ENCODE measurements at regions of chr4 and their contacts with region 1.

Region 1: DNA sequence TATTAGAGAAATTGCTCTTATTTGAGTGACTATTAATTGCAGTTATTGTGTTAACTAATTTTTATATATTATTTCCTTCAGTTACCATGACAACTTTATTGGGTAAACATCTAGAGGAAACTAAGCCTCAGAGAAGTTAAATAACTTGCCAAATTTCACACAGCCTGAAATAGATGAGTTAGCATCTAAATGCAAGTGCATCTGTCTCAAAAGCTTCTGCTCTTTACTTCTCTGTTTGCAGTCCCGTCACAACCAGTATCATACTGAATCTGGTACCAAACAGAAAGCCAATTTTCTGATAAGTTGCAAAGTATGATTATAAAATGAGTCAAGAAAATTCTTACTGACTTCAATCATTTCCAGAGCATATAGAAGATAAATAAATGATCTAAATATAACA is 1544.9 kb upstream of the PCDH7 start:
- DNase-seq: no peak
- ATAC-seq: no peak
- H3K4me3 ChIP-seq: no peak overlapping the region
- H3K4me3 Mint-ChIP-seq: no peak overlapping the region
- H3K27ac ChIP-seq: no peak overlapping the region
- H3K27ac Mint-ChIP-seq: no peak overlapping the region
- H3K4me1 ChIP-seq: no peaks in the 10 kb centered on the region
- H3K4me1 Mint-ChIP-seq: no peaks in the 10 kb centered on the region
- H3K27me3 ChIP-seq: no peaks in the 10 kb centered on the region
- H3K27me3 Mint-ChIP-seq: no peaks in the 10 kb centered on the region
- CTCF ChIP-seq: no peak

Region 2: DNA sequence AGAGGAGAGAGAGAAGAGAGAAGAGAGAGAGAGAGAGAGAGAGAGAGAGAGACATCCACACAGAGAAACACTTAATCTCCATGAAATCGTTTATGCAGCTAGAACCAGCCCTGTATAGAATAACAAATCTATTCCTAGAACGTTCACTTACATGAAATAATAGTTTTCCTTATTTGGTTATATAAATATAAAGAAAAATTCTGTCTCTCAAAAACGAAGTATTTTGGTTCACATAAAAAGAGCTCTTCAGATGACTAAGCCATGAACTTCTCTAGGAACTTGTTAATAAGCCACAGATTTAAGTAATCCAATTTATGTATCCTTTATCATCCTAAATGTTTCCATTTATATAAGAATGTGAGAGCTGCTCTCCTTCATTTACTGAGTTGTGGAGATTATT is 229.8 kb after region 1 on chr4:
- CTCF ChIA-PET with region 1: no interaction called
- POLR2A ChIA-PET with region 1: no interaction called
- intact Hi-C with region 1: loop called in 1 of 2 experiments (anchors 5 kb)
- DNase-seq: no peak
- ATAC-seq: no peak
- H3K4me3 ChIP-seq: no peak overlapping the region
- H3K4me3 Mint-ChIP-seq: no peak overlapping the region
- H3K27ac ChIP-seq: no peak overlapping the region
- H3K27ac Mint-ChIP-seq: no peak overlapping the region
- H3K4me1 ChIP-seq: no peaks in the 10 kb centered on the region
- H3K4me1 Mint-ChIP-seq: no peaks in the 10 kb centered on the region
- H3K27me3 ChIP-seq: no peaks in the 10 kb centered on the region
- H3K27me3 Mint-ChIP-seq: no peaks in the 10 kb centered on the region
- CTCF ChIP-seq: no peak

Measured in CD8-positive, alpha-beta T cell (primary cell).